Posterior vena cava (tissue), 2 donors: ENCODE measurements at regions of chr2 and their contacts with region 1.

Region 1: GRCh38 chr2:217785544-217786045 is 217.2 kb downstream of the TNS1 start:
- DNase-seq: peak; percentile 93

Region 2: GRCh38 chr2:216752855-216753505 is 1032.6 kb before region 1 on chr2:
- intact Hi-C with region 1: no loop called
- DNase-seq: no peak

Region 3: DNA sequence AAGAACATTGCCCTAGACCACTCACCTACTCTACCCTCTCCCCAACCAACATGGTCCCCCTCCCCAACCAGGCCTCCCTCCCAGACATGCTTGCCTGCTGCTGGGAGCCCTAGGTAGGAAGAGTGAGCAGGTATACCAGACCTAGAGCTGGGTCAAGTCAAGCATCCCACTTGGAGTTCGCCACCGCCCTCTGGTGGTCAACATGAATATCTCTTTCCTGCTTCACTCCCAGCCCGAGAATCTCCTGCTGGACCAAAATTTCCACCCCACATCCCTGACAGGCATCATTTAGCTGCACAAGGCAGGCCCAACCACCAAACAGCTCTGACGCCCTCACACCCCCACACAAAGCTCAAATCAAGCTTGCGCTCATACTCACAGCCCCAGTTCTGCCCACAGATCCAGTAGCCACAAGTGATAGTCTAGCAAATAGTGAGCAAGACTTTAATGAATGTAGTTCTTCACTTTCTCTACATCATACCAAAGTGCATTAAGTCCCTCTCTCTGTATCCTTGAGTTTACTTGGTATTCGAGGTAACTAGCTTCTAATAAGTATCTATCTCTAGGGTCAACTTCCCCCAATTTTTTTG is 101.2 kb after region 1 on chr2:
- intact Hi-C with region 1: loop called (anchors 5 kb)
- DNase-seq: peak; percentile 92

Region 4: GRCh38 chr2:217988014-217988839 is 202.6 kb after region 1 on chr2:
- intact Hi-C with region 1: loop called (anchors 2 to 5 kb)
- DNase-seq: peak; percentile 95

Region 5: GRCh38 chr2:218033590-218034496 is 248.2 kb after region 1 on chr2:
- intact Hi-C with region 1: loop called (anchors 5 kb)
- DNase-seq: peak; percentile 76